ENCODE measurements at regions of chr9 and their contacts with region 1.

Region 1: GRCh38 chr9:94870793-94871558 is 144.5 kb downstream of the AOPEP start:
- DNase-seq: peak in 1 of 2 donors; percentile 90
- ATAC-seq: peak; percentile 81 to 92 (median 85)
- H3K4me3 ChIP-seq: no peak overlapping the region
- H3K4me3 Mint-ChIP-seq: peak overlapping the region; percentile 52
- H3K27ac ChIP-seq: peak overlapping the region; percentile 46
- H3K27ac Mint-ChIP-seq: peak overlapping the region; percentile 77 to 86
- H3K4me1 ChIP-seq: peaks cover 18% of the 10 kb centered on the region
- H3K4me1 Mint-ChIP-seq: peaks cover 22% of the 10 kb centered on the region in 2 donors
- H3K27me3 ChIP-seq: no peaks in the 10 kb centered on the region
- H3K27me3 Mint-ChIP-seq: no peaks in the 10 kb centered on the region
- CTCF ChIP-seq: no peak

Region 2: GRCh38 chr9:94030318-94031179 is 840.4 kb before region 1 on chr9:
- intact Hi-C with region 1: loop called (anchors 10 kb)
- DNase-seq: peak; percentile 82 to 89
- ATAC-seq: peak; percentile 98 to 99 (median 99)
- H3K4me3 ChIP-seq: peak overlapping the region; percentile 94
- H3K4me3 Mint-ChIP-seq: peak overlapping the region; percentile 97
- H3K27ac ChIP-seq: peak overlapping the region; percentile 73
- H3K27ac Mint-ChIP-seq: peak overlapping the region; percentile 82 to 97
- H3K4me1 ChIP-seq: peaks cover 9% of the 10 kb centered on the region
- H3K4me1 Mint-ChIP-seq: peaks cover 8 to 24% of the 10 kb centered on the region in 2 donors
- H3K27me3 ChIP-seq: no peaks in the 10 kb centered on the region
- H3K27me3 Mint-ChIP-seq: peaks cover 0 to 7% of the 10 kb centered on the region in 2 donors
- CTCF ChIP-seq: no peak

Region 3: DNA sequence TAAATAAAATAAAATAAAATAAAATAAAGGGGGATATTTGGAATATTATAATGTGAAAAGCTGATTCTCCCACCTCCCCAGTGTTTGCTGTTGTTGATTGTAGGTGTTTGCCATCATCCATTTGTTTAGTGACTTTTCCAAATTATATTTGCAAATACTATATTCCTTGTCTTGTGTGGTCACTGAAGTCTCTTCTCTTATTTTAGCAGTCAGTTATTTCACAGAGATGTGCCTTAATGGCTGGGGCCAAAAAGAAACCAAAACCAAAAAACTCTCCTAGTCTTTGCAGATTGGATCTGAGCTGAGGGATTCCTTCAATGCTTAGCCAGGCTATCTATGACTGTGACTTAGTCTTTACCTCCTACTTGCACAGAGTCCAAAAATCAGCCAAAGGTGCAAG is 682.7 kb before region 1 on chr9:
- intact Hi-C with region 1: no loop called
- DNase-seq: no peak
- ATAC-seq: no peak
- H3K4me3 ChIP-seq: no peak overlapping the region
- H3K4me3 Mint-ChIP-seq: no peak overlapping the region
- H3K27ac ChIP-seq: no peak overlapping the region
- H3K27ac Mint-ChIP-seq: no peak overlapping the region
- H3K4me1 ChIP-seq: no peaks in the 10 kb centered on the region
- H3K4me1 Mint-ChIP-seq: peaks cover 14 to 20% of the 10 kb centered on the region in 2 donors
- H3K27me3 ChIP-seq: no peaks in the 10 kb centered on the region
- H3K27me3 Mint-ChIP-seq: no peaks in the 10 kb centered on the region
- CTCF ChIP-seq: no peak

Region 4: DNA sequence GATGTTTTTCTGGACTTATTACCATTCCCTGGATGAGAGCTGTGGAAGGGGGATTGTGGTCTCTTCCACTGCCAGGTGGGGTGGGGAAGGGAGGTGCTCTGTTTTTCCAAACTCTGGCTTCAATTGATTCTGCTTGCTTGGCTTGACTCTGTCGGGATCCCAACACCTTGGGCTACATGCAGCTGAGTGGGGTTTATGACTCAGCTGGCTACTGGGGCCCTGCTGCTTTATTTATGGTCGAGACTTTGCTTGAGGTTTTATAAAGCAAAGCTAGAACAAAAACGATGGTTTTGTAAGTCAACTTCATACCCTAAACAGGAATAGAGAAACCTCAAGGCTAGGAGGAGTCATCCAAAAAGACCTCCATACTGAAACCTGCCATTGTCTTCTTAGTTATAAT is 68.2 kb before region 1 on chr9:
- intact Hi-C with region 1: loop called (anchors 5 kb)
- DNase-seq: no peak
- ATAC-seq: peak in 2 of 3 donors; percentile 29 to 55
- H3K4me3 ChIP-seq: no peak overlapping the region
- H3K4me3 Mint-ChIP-seq: no peak overlapping the region
- H3K27ac ChIP-seq: no peak overlapping the region
- H3K27ac Mint-ChIP-seq: peak overlapping the region; percentile 21 to 56
- H3K4me1 ChIP-seq: no peaks in the 10 kb centered on the region
- H3K4me1 Mint-ChIP-seq: peaks cover 15 to 24% of the 10 kb centered on the region in 2 donors
- H3K27me3 ChIP-seq: no peaks in the 10 kb centered on the region
- H3K27me3 Mint-ChIP-seq: no peaks in the 10 kb centered on the region
- CTCF ChIP-seq: no peak

Region 5: GRCh38 chr9:94839398-94839797 is 31.6 kb before region 1 on chr9:
- intact Hi-C with region 1: loop called (anchors 5 kb)
- DNase-seq: no peak
- ATAC-seq: peak; percentile 61 to 92 (median 63)
- H3K4me3 ChIP-seq: no peak overlapping the region
- H3K4me3 Mint-ChIP-seq: peak overlapping the region; percentile 10
- H3K27ac ChIP-seq: no peak overlapping the region
- H3K27ac Mint-ChIP-seq: peak overlapping the region; percentile 50 to 80
- H3K4me1 ChIP-seq: no peaks in the 10 kb centered on the region
- H3K4me1 Mint-ChIP-seq: peaks cover 20 to 21% of the 10 kb centered on the region in 2 donors
- H3K27me3 ChIP-seq: no peaks in the 10 kb centered on the region
- H3K27me3 Mint-ChIP-seq: no peaks in the 10 kb centered on the region
- CTCF ChIP-seq: no peak